Activated naive CD4-positive, alpha-beta T cell treated with anti-CD3 and anti-CD28 coated beads, Interleukin-2, amount 10 ng/mL, durations not matched to agents 7 days and 5 days (primary cell): ENCODE measurements at regions of chr13 and their contacts with region 1.

Region 1: DNA sequence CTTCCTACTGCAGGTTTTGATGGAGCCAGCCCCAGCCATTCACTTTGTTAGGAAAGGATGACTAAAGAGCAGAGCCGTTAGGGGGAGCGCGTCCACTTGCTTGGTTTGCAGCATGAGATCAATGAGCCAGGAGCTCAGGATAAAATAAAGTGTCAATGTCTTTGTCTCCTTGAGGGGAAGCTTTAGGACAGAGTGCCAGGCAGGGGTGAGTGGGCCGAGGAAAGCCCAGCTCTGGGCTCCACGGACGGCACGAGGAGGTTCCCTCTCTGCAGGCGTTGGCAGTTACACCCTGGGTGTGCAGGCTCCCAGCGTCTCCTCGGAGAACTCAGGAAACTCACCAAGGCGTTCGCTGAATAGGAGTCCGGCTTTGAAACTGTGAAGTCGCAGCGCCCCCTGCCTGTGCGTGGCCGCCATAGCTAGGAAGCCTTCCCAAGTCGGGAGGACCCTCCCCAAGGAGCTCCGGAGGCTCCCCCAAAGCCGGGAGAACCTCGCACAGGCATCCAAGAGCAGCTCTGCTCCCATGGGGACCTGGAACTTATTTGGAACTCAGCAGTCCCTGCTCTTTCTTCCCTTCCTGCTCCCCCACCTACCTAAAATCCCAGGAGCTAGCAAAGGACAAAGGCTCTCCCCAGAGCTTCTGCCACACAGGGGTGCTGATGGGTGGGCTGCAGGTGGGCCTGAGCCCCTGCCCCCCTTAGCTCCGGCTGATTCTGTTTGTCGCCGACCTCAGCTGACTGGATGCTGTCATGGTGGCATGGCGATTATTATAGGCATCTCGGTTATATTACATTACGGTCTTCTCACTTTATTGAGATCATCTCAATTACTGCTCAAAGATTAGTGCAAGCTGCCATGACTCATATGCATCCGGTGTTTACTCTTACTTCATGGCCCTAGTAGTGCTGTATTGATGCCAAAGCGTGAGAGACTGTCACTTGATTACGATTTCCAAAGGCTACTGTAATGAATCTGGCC is 34.4 kb downstream of the GSX1 start:
- DNase-seq: peak; percentile 77
- H3K4me3 Mint-ChIP-seq: no peak overlapping the region
- H3K27ac Mint-ChIP-seq: no peak overlapping the region
- H3K4me1 Mint-ChIP-seq: peaks cover 4% of the 10 kb centered on the region
- H3K27me3 Mint-ChIP-seq: peaks cover 78% of the 10 kb centered on the region

Region 2: DNA sequence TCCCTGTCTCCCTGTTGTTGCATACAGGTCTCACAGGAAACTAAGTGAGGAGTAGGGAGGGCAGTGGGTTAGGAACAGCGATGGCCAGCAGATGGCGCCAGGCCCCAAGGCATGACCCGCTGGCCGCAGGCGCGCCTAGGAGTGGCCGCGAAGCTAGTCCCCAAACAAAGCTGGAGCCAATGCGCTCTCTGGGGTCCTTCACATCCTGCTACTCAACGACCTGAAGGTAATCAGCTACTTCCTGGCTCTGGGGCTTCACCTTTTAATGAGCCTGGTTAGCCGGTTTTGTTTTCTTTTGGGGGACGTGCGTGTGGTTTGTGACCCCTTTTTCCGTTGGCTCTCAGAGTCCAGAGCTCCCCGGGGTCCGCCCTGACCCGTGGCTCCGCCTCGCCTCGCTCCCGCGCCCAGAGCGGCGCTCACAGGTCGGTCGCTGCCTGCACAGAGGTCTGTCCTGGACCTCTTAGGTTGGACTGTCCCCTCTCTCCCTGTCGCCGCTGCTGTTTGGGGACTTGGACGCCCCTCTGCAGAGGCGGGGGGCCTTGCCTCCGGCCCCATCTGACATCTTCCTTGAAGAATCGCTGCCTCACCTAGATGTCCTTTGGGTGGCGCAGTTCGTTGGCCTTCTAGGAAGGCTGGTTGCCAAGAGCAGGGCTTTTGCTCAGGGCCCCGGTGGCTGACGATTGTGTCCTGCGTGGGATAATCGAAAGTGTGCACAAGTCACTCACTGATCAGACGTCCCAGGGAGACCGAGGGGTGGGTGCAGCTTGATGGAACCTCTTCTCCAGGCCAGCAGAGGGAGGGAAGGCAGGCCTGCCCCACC is 464.4 kb before region 1 on chr13:
- CTCF ChIA-PET with region 1: interaction called, 100 read pairs
- DNase-seq: peak; percentile 85
- H3K4me3 Mint-ChIP-seq: no peak overlapping the region
- H3K27ac Mint-ChIP-seq: no peak overlapping the region
- H3K4me1 Mint-ChIP-seq: peaks cover 11% of the 10 kb centered on the region
- H3K27me3 Mint-ChIP-seq: peaks cover 59% of the 10 kb centered on the region

Region 3: GRCh38 chr13:27406178-27406939 is 420.3 kb before region 1 on chr13:
- CTCF ChIA-PET with region 1: interaction called, 15 read pairs
- DNase-seq: peak; percentile 38
- H3K4me3 Mint-ChIP-seq: no peak overlapping the region
- H3K27ac Mint-ChIP-seq: no peak overlapping the region
- H3K4me1 Mint-ChIP-seq: peaks cover 5% of the 10 kb centered on the region
- H3K27me3 Mint-ChIP-seq: peaks cover 40% of the 10 kb centered on the region

Region 4: DNA sequence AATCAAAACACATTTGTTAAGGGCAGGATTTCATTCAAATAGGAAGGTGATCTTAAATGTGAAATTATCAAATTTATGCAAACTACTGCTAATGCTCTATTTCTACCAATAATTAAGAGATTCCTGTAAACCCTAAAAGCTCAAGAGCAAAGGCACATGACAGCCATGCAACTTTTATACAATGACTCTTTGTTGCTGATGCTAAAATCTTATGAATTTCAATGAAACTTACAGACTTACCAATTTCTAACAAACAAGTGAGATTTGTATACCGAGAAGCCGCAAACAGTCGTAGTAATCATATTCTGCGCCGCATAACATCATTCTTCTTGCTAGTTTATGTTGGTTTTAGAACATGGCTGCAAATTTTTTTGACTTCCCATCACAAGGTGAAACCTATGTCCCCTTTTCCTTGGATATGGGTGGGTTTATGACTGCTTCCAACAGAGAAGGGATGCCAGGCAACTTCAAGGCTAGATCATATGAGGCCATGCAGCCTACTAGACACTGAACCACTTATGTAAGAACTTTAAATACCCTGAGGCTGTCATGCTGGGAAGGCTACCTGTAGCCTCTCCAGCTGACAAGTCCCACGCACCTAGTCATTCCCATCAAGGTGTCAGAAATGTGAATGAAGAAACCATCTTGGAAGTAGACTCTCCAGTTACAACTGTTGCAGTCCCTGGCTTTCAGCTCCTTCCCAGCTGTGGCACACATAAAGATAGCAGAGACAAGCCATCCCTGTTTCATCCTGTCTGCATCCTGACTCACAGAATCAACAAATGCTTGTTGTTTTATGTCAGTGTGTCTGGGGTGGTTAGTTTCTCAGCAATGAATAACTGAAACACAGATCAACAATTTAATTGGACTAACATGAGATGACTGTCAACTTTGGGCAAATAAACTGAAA is 248.3 kb before region 1 on chr13:
- CTCF ChIA-PET with region 1: no interaction called
- DNase-seq: no peak
- H3K4me3 Mint-ChIP-seq: no peak overlapping the region
- H3K27ac Mint-ChIP-seq: no peak overlapping the region
- H3K4me1 Mint-ChIP-seq: peaks cover 5% of the 10 kb centered on the region
- H3K27me3 Mint-ChIP-seq: no peaks in the 10 kb centered on the region

Region 5: DNA sequence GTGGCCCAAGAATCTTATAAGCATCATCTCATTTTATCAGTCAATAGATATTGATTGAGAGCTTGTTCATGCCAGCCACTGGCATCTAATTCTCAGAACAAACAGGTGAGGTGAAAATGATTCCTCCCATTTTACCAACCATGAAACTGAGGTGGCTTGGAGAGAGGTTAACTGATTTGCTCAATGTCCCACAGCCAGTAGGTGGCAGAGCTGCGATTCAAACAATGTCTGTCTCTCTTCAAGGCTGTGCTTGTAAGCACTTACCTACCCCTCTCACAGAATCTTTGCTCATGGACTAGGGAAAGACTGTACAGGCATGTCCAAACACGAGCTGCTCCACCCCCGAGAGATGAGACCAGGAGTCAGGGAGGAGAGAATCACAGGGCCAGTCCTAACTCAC is 55.9 kb before region 1 on chr13:
- CTCF ChIA-PET with region 1: interaction called, 62 read pairs
- DNase-seq: peak; percentile 49
- H3K4me3 Mint-ChIP-seq: no peak overlapping the region
- H3K27ac Mint-ChIP-seq: no peak overlapping the region
- H3K4me1 Mint-ChIP-seq: no peaks in the 10 kb centered on the region
- H3K27me3 Mint-ChIP-seq: peaks cover 25% of the 10 kb centered on the region

Region 6: GRCh38 chr13:27797228-27797624 is 29.4 kb before region 1 on chr13:
- CTCF ChIA-PET with region 1: interaction called, 14 read pairs
- DNase-seq: no peak
- H3K4me3 Mint-ChIP-seq: no peak overlapping the region
- H3K27ac Mint-ChIP-seq: no peak overlapping the region
- H3K4me1 Mint-ChIP-seq: peaks cover 4% of the 10 kb centered on the region
- H3K27me3 Mint-ChIP-seq: peaks cover 86% of the 10 kb centered on the region

Region 7: GRCh38 chr13:27839809-27840467 is 13.3 kb after region 1 on chr13:
- CTCF ChIA-PET with region 1: interaction called, 11 read pairs
- DNase-seq: no peak
- H3K4me3 Mint-ChIP-seq: no peak overlapping the region
- H3K27ac Mint-ChIP-seq: no peak overlapping the region
- H3K4me1 Mint-ChIP-seq: no peaks in the 10 kb centered on the region
- H3K27me3 Mint-ChIP-seq: peaks cover 22% of the 10 kb centered on the region

Region 8: GRCh38 chr13:27981006-27981708 is 154.5 kb after region 1 on chr13:
- CTCF ChIA-PET with region 1: interaction called, 53 read pairs
- DNase-seq: no peak
- H3K4me3 Mint-ChIP-seq: no peak overlapping the region
- H3K27ac Mint-ChIP-seq: no peak overlapping the region
- H3K4me1 Mint-ChIP-seq: peaks cover 14% of the 10 kb centered on the region
- H3K27me3 Mint-ChIP-seq: peaks cover 79% of the 10 kb centered on the region

Region 9: DNA sequence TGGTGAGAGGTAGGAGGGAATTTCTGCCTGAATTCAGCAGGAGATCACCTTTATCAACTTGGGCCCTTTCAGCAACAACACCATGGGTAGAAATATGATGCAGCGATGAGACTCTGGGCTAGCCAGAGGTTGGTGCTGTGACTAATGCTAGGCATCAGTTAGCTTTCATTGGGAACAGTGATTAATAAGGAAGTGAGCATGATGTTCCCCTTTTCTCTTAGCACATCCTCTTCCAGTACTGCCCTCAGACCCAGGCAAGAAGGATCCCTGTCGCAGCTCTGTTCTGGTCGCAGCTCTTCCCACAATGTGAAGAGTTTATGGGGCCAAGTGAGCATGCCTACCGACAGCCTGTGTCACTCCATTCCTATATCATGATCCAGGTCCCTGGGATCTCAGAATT is 567.8 kb after region 1 on chr13:
- CTCF ChIA-PET with region 1: no interaction called
- DNase-seq: no peak
- H3K4me3 Mint-ChIP-seq: no peak overlapping the region
- H3K27ac Mint-ChIP-seq: no peak overlapping the region
- H3K4me1 Mint-ChIP-seq: no peaks in the 10 kb centered on the region
- H3K27me3 Mint-ChIP-seq: no peaks in the 10 kb centered on the region